ENCODE measurements at regions of chr17 and their contacts with region 1.

Region 1: DNA sequence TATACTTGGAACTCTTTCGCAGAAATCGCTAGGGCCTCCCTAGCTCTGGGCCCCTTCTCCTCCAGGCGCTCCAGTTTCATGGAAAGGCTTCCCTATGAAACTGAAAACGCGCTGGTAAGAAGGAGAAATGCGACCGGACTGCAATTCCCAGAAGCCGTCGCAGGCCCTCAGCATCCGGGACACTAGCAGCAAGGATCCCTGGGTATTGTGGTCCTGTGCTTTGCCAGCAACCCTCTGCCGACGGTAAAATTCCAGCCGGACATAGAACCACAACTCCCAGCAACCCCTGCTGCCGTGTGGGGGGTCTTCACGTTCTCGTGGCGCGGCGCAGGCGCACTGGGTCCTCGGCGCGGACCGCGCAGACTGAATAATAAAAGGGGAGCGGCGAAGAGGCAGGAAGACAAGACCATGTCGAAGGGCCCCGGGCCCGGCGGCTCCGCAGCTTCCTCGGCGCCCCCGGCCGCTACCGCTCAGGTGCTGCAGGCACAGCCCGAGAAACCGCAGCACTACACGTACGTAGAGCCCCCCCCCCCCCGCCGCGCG is at the start of gene UNK:
- DNase-seq: peak; percentile 100
- ATAC-seq: peak; percentile 78
- H3K4me3 ChIP-seq: peak within 1 kb of the TSS; percentile 55 to 71
- H3K27ac ChIP-seq: peak within 1 kb of the TSS; percentile 99
- H3K4me1 ChIP-seq: peaks cover 40 to 65% of the 10 kb centered on the region in 2 experiments
- H3K27me3 ChIP-seq: no peaks in the 10 kb centered on the region
- CTCF ChIP-seq: no peak
- POLR2A ChIP-seq: no peak
- RAD21 ChIP-seq: no peak
- total RNA-seq, gene UNK: 40.6 TPM

Region 2: DNA sequence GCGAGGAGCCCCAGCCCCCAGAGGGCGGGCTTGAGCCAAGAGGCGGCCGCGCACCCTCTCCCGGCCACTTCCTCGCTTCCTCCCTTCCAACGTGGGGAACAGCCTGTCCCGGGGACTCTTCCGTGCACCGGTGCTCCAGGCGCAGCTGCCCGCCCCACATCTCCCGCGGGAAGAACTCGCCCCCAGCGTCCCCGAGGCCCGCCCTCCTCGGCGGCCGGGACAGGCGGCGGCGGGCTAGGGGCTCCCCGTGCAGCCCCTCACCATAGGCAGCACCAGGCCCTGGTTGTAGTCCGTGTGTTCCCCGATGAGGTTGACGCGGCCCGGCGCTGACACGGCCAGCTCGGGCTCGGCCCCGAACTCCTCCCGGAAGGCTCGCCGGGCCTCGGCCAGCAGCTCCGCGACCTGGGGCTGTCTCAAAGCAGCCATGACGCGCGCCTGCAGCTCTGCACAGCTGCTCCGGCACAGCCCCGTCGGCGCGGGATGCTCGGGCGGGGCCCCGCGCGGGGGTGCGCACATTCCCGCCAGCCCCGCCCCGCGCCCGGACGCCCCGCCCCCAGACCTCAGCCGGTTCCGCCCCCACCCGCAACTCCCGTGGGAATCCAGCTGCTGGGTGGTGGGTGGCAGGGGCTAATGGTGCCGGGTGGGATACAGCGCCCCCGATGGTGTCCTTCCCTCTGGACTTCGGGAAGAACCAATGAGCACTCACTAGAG is 19.7 kb before region 1 on chr17 and contains the start of gene GALK1:
- CTCF ChIA-PET with region 1: interaction called, 11 read pairs
- POLR2A ChIA-PET with region 1: interaction called, 59 read pairs
- RAD21 ChIA-PET with region 1: interaction called, 3 to 4 read pairs
- intact Hi-C with region 1: no loop called
- DNase-seq: no peak
- ATAC-seq: peak; percentile 85
- H3K4me3 ChIP-seq: peak within 1 kb of the TSS; percentile 84 to 91
- H3K27ac ChIP-seq: peak within 1 kb of the TSS; percentile 78
- H3K4me1 ChIP-seq: peaks cover 13 to 29% of the 10 kb centered on the region in 2 experiments
- H3K27me3 ChIP-seq: no peaks in the 10 kb centered on the region
- CTCF ChIP-seq: peak in 2 of 3 experiments; percentile 65 to 94; a peak in 4 of 6 replicates
- POLR2A ChIP-seq: no peak
- RAD21 ChIP-seq: peak; percentile 86
- total RNA-seq, gene GALK1: 57.8 TPM

Region 3: DNA sequence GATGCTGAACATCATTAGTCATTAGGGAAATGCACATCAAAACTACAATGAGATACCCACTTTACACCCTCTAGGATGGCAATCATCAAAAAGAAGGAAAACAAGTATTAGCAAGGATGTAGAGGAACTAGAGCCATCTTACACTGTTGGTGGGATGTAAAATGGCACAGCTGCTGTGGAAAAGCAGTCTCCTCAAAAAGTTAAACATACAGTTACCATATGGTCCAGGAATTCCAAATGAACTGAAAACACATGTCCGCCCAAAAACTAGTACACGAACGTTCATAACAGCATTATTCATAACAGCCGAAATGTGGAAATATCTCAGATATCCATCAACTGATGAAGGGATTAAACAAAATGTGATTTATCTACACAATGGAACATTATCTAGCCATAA is 149.3 kb after region 1 on chr17:
- CTCF ChIA-PET with region 1: no interaction called
- POLR2A ChIA-PET with region 1: no interaction called
- RAD21 ChIA-PET with region 1: no interaction called
- intact Hi-C with region 1: no loop called
- DNase-seq: no peak
- ATAC-seq: no peak
- H3K4me3 ChIP-seq: no peak overlapping the region
- H3K27ac ChIP-seq: no peak overlapping the region
- H3K4me1 ChIP-seq: no peaks in the 10 kb centered on the region
- H3K27me3 ChIP-seq: no peaks in the 10 kb centered on the region
- CTCF ChIP-seq: no peak
- POLR2A ChIP-seq: no peak
- RAD21 ChIP-seq: no peak

Region 4: DNA sequence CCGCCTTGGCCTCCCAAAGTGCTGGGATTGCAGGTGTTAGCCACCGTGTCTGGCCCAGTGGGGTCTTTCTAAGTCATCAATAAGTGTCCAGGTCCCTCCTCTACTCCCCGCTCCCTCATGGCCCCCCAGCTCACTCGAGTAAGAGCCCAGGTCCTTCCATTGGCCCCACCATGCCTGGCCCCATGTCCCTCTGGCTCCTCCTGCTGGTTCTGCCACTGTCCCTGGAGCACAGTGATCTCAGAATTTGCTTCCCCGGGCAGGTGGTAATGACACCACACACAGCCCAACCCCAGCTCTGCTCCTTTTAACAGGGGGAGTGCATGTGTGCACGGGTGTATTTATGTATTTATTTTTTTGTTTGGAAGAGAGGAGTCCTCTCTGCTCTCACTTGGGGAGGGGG is 1103.3 kb after region 1 on chr17:
- CTCF ChIA-PET with region 1: no interaction called
- POLR2A ChIA-PET with region 1: no interaction called
- RAD21 ChIA-PET with region 1: no interaction called
- intact Hi-C with region 1: no loop called
- DNase-seq: no peak
- ATAC-seq: peak; percentile 65
- H3K4me3 ChIP-seq: no peak overlapping the region
- H3K27ac ChIP-seq: no peak overlapping the region
- H3K4me1 ChIP-seq: no peaks in the 10 kb centered on the region
- H3K27me3 ChIP-seq: no peaks in the 10 kb centered on the region
- CTCF ChIP-seq: peak; percentile 32 to 42 (median 38); a peak in 4 of 6 replicates
- POLR2A ChIP-seq: no peak
- RAD21 ChIP-seq: peak; percentile 53